Activated CD4-positive, alpha-beta T cell treated with anti-CD3 and anti-CD28 coated beads for 36 hours (primary cell): ENCODE measurements at regions of chr15 and their contacts with region 1.

Region 1: GRCh38 chr15:28885630-28886430 is at the start of gene APBA2:
- DNase-seq: peak; percentile 72
- ATAC-seq: peak; percentile 56
- H3K4me3 Mint-ChIP-seq: peak within 1 kb of the TSS; percentile 71
- H3K27ac Mint-ChIP-seq: no peak within 1 kb of the TSS
- H3K4me1 Mint-ChIP-seq: peaks cover 43% of the 10 kb centered on the region
- H3K27me3 Mint-ChIP-seq: no peaks in the 10 kb centered on the region
- total RNA-seq, gene APBA2: 12.8 to 17.5 TPM

Region 2: GRCh38 chr15:28921919-28922706 is 36.3 kb after region 1 on chr15:
- CTCF ChIA-PET with region 1: interaction called, 5 read pairs
- POLR2A ChIA-PET with region 1: no interaction called
- intact Hi-C with region 1: loop called in 1 of 2 experiments (anchors 5 kb)
- DNase-seq: no peak
- ATAC-seq: no peak
- H3K4me3 Mint-ChIP-seq: no peak overlapping the region
- H3K27ac Mint-ChIP-seq: no peak overlapping the region
- H3K4me1 Mint-ChIP-seq: peaks cover 65% of the 10 kb centered on the region
- H3K27me3 Mint-ChIP-seq: no peaks in the 10 kb centered on the region